Activated naive CD4-positive, alpha-beta T cell treated with anti-CD3 and anti-CD28 coated beads for 36 hours (primary cell): ENCODE measurements at regions of chr15 and their contacts with region 1.

Region 1: GRCh38 chr15:84658080-84658787 is at the start of gene NMB:
- DNase-seq: peak; percentile 83
- H3K4me3 Mint-ChIP-seq: peak within 1 kb of the TSS; percentile 70
- H3K27ac Mint-ChIP-seq: no peak within 1 kb of the TSS
- H3K4me1 Mint-ChIP-seq: peaks cover 28% of the 10 kb centered on the region
- H3K27me3 Mint-ChIP-seq: no peaks in the 10 kb centered on the region
- total RNA-seq, gene NMB: 5.1 to 5.7 TPM

Region 2: DNA sequence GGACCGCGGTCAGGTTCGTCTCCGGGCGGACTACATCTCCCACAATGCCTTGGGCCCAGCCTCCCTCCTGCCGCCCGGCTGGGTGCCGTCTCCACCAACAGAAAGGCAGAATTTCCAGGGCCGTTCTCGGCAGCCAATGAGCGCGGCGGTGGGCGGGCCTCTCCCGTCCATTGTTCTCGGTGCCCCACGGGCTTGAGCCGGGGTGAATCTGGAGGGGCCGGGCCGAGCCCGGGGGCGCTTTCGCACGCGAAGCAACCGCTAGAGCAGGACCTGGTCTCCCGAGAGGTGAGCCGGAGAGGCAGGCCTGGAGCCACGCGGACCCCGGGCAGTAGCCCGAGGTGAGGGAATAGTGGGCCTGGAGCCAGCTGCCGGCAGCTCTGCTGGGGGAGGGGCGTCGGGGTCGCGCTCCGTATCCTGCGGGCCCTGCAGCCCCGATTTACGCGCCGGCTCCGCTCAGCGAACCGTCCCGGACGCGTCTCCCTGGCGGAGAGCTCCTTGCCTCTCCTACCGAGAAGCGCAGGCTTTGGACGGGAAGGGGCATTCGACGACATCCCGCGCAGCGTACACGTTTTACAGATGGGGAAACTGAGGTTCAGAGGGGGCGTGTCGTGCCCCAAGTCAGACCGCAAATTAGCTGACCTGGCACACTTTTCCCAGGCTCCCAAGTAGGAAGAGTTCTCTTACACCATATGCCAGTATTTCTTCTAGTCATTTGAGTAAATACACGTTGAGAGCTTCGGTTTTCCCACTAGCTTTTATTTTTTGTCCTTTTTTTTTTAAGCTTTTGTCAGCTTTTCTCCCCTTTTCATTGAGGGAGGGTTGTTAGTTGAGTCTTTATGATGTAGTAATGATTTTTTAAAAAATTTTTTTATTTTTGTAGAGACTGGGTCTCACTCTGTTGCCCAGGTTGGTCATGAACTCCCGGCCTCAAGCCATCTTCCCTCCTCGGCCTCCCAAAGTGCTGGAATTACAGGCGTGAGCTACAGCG is 57.1 kb before region 1 on chr15 and contains the start of gene ZSCAN2:
- CTCF ChIA-PET with region 1: interaction called, 12 read pairs
- intact Hi-C with region 1: loop called (anchors 1 kb)
- DNase-seq: peak; percentile 97
- H3K4me3 Mint-ChIP-seq: peak within 1 kb of the TSS; percentile 90
- H3K27ac Mint-ChIP-seq: no peak within 1 kb of the TSS
- H3K4me1 Mint-ChIP-seq: peaks cover 62% of the 10 kb centered on the region
- H3K27me3 Mint-ChIP-seq: no peaks in the 10 kb centered on the region
- total RNA-seq, gene ZSCAN2: 5.3 to 5.6 TPM

Region 3: DNA sequence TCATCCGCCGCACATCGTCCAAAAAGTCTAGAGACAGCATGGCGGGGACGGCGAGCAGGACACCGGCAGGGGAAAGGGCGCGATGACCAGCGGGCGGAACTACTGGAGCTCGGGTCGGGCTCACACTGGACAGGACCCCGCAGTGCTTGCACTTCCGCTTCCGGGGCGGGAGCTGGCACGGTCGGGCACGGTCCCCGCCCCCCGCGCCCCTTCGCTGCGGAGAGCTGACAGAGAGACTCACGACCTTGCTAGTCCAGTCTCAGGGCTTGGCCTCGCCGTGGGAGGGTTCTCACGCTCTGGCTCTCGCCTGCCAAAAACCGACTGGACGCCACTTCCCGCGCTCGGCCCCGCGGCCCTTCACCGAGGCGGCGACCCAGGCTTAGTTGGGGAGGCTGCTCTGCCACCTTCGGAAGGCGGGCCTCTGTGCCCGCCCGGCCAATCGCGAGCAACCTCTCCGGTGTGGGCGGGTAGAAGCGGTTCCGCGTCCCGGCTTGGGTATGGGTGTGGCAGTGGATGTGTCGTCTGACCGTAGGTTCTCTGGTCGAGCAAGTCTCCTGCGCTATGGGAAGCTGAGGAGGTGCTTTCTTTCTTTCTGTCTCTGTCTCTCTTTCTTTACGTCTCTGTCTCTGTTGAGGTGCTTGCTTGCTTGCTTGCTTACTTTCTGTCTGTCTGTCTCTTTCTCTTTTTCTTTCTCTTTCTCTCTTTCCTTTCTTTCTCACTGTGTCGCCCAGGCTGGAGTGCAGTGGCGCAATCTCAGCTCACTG is 58.0 kb after region 1 on chr15 and contains the start of gene SEC11A:
- CTCF ChIA-PET with region 1: interaction called, 8 read pairs
- intact Hi-C with region 1: loop called (anchors 1 kb)
- DNase-seq: peak; percentile 93
- H3K4me3 Mint-ChIP-seq: peak within 1 kb of the TSS; percentile 93
- H3K27ac Mint-ChIP-seq: peak within 1 kb of the TSS; percentile 93
- H3K4me1 Mint-ChIP-seq: peaks cover 51% of the 10 kb centered on the region
- H3K27me3 Mint-ChIP-seq: no peaks in the 10 kb centered on the region
- total RNA-seq, gene SEC11A: 87.2 to 99.1 TPM

Region 4: GRCh38 chr15:84761607-84762131 is 103.4 kb after region 1 on chr15:
- CTCF ChIA-PET with region 1: interaction called, 3 read pairs
- intact Hi-C with region 1: loop called (anchors 1 kb)
- DNase-seq: peak; percentile 20
- H3K4me3 Mint-ChIP-seq: no peak overlapping the region
- H3K27ac Mint-ChIP-seq: no peak overlapping the region
- H3K4me1 Mint-ChIP-seq: peaks cover 28% of the 10 kb centered on the region
- H3K27me3 Mint-ChIP-seq: no peaks in the 10 kb centered on the region

Region 5: DNA sequence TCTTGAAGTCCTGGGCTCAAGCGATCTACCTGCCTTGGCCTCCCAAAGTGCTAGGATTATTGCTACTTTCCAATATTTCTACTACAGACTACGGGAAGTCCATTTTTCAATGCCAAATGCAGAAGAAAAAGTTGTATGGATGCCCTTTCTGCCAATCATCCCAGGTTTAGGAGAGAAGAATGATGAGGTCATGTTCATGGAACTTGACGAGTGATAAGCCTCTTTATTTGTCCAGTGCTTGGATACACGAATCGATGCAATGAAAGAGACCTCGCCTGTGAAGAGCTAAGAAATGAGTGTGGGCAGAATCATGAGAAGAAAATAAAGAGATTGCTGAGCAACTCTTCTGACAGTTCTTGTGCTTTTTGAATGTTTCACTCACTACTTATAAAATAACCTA is 225.2 kb after region 1 on chr15:
- CTCF ChIA-PET with region 1: interaction called, 6 read pairs
- intact Hi-C with region 1: loop called (anchors 1 kb)
- DNase-seq: no peak
- H3K4me3 Mint-ChIP-seq: no peak overlapping the region
- H3K27ac Mint-ChIP-seq: no peak overlapping the region
- H3K4me1 Mint-ChIP-seq: no peaks in the 10 kb centered on the region
- H3K27me3 Mint-ChIP-seq: no peaks in the 10 kb centered on the region

Region 6: DNA sequence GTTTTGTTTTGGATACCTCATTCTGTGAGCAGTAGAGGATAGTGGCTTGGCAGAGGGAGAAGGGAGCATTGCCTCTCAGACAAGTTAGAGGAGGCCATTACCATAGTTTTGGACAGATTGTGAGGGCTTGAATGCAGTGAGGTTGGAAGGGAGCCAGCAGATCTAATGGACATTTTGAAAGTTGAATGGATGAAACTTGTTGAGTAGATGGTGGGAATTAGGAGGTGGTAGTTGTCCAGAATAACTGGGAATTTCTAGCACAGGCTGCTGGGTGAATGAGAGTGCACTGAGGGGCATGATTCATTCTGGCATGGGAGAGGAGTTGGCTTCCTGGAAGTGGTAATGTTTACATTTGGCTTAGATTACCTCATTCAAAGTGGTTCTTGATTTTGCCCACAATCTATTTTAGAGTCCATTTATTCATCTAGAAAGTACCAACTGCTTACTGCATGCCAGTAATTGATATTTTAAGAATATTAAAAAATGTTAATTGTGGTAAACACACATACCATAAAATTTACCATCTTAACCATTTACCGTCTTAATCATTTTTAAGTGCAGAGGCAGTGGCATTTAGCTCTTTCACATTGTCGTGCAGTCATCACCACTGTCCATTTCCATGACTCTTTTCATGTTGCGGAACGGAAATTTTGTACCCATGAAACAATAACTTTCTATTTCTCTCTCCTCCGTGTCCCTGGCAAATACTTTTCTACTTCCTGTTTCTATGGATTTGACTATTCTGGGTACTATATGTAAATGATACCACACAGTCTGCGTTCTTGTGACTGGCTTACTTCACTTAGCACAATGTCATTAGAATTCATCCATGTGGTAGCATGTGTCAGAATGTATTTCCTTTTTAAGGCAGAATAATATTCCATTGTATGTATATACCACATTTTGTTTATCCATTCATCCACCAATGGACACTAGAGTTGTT is 749.8 kb after region 1 on chr15:
- CTCF ChIA-PET with region 1: no interaction called
- intact Hi-C with region 1: loop called (anchors 10 kb)
- DNase-seq: peak; percentile 67
- H3K4me3 Mint-ChIP-seq: peak overlapping the region; percentile 58
- H3K27ac Mint-ChIP-seq: peak overlapping the region; percentile 88
- H3K4me1 Mint-ChIP-seq: peaks cover 86% of the 10 kb centered on the region
- H3K27me3 Mint-ChIP-seq: no peaks in the 10 kb centered on the region